ENCODE measurements at regions of chr20 and their contacts with region 1.

Region 1: DNA sequence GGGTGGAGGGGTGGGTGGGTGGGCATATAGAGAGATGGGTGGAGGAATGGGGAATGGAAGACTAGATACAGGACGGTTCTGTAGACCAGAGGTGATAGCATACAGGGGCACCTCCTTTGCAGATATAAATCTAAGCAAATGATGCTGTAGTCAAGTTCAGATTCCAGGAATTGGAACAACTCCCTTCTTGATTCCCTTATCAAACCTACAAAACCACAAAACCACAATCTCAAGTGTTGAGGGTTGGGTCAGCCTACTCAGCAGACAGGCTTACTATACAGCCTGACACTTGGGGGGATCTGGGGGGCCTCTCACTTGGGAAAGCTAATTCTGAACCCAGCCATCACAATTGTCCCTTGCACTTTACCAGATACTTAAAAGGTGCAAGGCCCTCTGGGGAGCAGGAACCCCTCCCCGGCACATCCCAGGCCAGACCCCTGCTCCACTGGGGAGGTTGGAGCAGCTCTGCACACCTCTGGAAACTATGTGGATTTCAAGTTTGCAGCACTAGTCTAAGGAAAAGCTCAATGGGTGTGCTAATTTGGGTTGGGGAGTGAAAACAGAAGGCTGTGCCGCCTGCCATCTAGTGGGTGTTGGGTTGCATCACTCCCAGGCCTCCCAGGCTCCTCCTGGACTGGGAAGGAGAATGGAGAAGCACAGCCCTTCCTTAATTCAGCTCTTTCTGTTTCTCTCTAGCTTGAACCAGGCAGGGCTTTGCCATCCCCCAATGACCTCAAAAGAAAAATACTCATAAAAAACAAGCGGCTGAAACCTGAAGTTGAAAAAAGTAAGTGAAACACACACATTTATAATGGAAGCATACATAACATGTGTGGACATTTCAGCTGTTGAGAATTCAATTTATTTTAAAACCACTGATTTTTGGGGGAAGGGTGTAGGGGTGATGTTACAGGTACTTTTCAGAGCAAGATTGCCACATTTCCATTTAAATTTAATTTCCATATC is 121.2 kb upstream of the LAMP5 start:
- DNase-seq: peak; percentile 32 to 81
- H3K4me3 ChIP-seq: no peak overlapping the region
- H3K27ac ChIP-seq: no peak overlapping the region
- H3K4me1 ChIP-seq: peaks cover 0 to 16% of the 10 kb centered on the region in 2 donors
- H3K27me3 ChIP-seq: no peaks in the 10 kb centered on the region
- CTCF ChIP-seq: peak; percentile 53 to 80 (median 60)

Region 2: GRCh38 chr20:8756410-8756809 is 636.8 kb before region 1 on chr20:
- intact Hi-C with region 1: loop called (anchors 2 kb)
- DNase-seq: no peak
- H3K4me3 ChIP-seq: no peak overlapping the region
- H3K27ac ChIP-seq: no peak overlapping the region
- H3K4me1 ChIP-seq: no peaks in the 10 kb centered on the region
- H3K27me3 ChIP-seq: no peaks in the 10 kb centered on the region
- CTCF ChIP-seq: no peak

Region 3: GRCh38 chr20:8790442-8791074 is 602.6 kb before region 1 on chr20:
- intact Hi-C with region 1: loop called (anchors 2 kb)
- DNase-seq: peak in 1 of 2 donors; percentile 66
- H3K4me3 ChIP-seq: no peak overlapping the region
- H3K27ac ChIP-seq: no peak overlapping the region
- H3K4me1 ChIP-seq: no peaks in the 10 kb centered on the region
- H3K27me3 ChIP-seq: no peaks in the 10 kb centered on the region
- CTCF ChIP-seq: peak; percentile 79 to 91 (median 88)

Region 4: GRCh38 chr20:9200620-9201019 is 192.6 kb before region 1 on chr20:
- intact Hi-C with region 1: no loop called
- DNase-seq: no peak
- H3K4me3 ChIP-seq: no peak overlapping the region
- H3K27ac ChIP-seq: no peak overlapping the region
- H3K4me1 ChIP-seq: no peaks in the 10 kb centered on the region
- H3K27me3 ChIP-seq: no peaks in the 10 kb centered on the region
- CTCF ChIP-seq: no peak

Measured in ascending aorta (tissue), 2 donors.